ENCODE measurements at regions of chr22 and their contacts with region 1.

Region 1: DNA sequence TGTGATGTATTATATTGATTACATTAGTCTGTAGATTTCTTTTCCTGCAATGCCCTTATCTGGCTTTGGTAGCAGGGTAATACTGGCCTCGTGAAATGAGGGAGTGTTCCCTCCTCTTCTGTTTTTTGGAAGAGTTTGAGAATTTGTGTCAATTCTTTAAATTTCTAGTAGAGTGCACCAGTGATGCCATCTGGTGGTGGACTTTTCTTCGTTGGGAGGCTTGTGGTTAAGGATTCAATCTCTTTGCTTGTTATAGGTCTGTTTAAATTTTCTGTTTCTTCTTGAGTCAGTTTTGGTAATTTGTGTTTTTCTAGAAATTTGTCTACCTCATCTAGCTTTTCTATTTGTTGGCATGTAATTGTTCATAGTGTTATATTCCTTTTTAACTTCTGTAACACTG is 18.9 kb downstream of the SHANK3 start:
- DNase-seq: peak in 1 of 2 experiments; percentile 48
- H3K4me3 ChIP-seq: no peak overlapping the region
- H3K27ac ChIP-seq: no peak overlapping the region
- H3K4me1 ChIP-seq: no peaks in the 10 kb centered on the region
- H3K27me3 ChIP-seq: peaks cover 0 to 2% (median under 1%) of the 10 kb centered on the region in 4 experiments; a peak in 2 of 7 replicates
- CTCF ChIP-seq: peak in 2 of 3 experiments; percentile 67 to 68; a peak in 3 of 4 replicates
- EP300 ChIP-seq: no peak
- POLR2A ChIP-seq: no peak
- RAD21 ChIP-seq: peak; percentile 76 to 78

Region 2: DNA sequence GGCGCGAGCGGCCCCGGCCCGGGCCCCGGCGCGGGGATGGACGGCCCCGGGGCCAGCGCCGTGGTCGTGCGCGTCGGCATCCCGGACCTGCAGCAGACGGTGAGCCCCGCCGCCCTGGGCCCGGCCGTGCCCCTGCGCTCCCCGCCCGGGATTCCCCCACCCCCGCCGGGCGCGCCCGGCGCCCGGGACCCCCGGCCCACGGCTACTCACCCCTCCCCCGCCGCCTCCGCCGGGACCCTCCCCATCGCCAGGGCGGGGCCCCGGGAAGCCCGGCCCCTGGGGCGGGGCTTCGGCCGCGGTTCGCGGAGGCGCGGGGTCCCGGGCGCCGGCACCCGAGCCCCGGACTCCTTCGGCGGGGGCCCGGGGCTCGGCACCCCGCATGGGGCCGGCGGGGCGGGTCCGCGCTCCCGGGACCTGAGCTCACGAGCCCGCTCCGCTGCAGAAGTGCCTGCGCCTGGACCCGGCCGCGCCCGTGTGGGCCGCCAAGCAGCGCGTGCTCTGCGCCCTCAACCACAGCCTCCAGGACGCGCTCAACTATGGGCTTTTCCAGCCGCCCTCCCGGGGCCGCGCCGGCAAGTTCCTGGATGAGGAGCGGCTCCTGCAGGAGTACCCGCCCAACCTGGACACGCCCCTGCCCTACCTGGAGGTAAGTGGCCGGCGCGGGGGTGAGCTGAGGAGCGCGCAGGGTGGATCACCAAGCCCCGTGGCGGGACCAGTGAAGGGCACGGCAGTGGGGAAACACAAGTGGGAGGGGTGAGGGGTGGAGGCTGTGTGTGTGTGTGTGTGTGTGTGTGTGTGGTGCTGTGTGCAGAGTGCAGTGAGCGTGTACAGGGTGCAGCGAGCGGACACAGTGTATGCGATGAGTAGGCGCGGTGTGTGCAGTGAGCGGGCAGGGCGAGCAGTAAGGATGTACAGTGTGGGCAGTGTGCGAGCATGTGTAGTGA is 16.6 kb before region 1 on chr22:
- CTCF ChIA-PET with region 1: interaction called, 27 read pairs
- POLR2A ChIA-PET with region 1: interaction called, 4 read pairs
- DNase-seq: peak; percentile 57 to 90
- H3K4me3 ChIP-seq: peak overlapping the region; percentile 51 to 70 (median 62)
- H3K27ac ChIP-seq: no peak overlapping the region; the same call in 1 of the 2 replicates
- H3K4me1 ChIP-seq: peaks cover 0 to 16% (median 9%) of the 10 kb centered on the region in 4 experiments; a peak in 6 of 7 replicates
- H3K27me3 ChIP-seq: peaks cover 3 to 21% (median 16%) of the 10 kb centered on the region in 4 experiments
- CTCF ChIP-seq: no peak
- EP300 ChIP-seq: no peak
- POLR2A ChIP-seq: no peak
- RAD21 ChIP-seq: peak in 1 of 2 experiments; percentile 29; a peak in 2 of 4 replicates

Measured in H1 (cell line).